PC-9 (cell line): ENCODE measurements at regions of chr11 and their contacts with region 1.

Region 1: DNA sequence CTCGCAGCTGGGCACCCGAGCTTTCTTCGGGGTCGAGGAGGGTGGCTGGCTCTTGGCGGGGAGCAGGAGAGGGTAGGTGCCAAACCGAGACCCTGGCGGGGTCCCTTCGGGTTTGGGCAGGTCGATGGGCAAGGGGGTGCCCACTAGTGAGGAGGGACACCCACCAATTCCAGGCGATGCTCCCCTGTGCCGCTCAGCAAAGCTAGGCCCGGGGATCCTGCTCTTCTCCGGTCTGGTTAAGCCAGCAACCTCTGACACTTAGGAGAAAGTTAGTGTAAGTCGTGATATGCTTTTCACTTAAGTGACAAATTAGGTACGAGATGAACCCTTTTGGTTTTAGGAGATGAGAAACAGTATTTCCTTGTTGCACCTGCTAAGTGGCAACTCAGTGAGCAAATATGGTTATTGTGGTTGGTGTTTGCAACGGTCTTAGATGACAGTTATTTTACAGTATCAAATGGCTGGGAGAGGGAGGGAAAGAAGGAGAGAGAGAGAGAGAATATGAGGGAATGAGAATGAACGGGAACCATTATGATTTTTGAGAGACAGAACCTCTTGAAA is 565 bp downstream of the NUCB2 start:
- DNase-seq: peak in 1 of 2 experiments; percentile 56
- H3K4me3 ChIP-seq: peak overlapping the region; percentile 79
- H3K27ac ChIP-seq: no peak overlapping the region
- H3K4me1 ChIP-seq: 0 out of 2 replicates have a peak, but pooled peaks cover 9% of the 10 kb centered on the region
- H3K27me3 ChIP-seq: no peaks in the 10 kb centered on the region
- CTCF ChIP-seq: no peak

Region 2: DNA sequence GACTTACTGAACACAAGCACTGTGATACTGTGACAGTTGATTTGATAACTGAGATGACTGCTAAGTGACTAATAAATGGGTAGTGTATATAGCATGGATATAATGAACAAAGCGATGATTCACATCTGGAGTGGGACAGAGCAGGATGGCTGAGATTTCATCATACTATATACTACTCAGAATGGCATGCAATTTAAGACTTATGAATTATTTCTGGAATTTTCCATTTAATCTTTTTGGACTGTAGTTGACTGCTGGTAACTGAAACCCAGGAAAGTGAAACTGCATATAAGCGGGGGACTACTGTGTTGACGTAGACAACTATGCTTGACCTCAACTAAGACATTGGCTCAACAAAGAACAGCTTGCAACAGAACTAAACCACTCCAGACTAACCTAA is 20.6 kb before region 1 on chr11:
- CTCF ChIA-PET with region 1: no interaction called
- POLR2A ChIA-PET with region 1: interaction called, 16 read pairs
- intact Hi-C with region 1: no loop called
- DNase-seq: peak in 1 of 2 experiments; percentile 77
- H3K4me3 ChIP-seq: no peak overlapping the region
- H3K27ac ChIP-seq: peak overlapping the region; percentile 79
- H3K4me1 ChIP-seq: peaks cover 15% of the 10 kb centered on the region
- H3K27me3 ChIP-seq: no peaks in the 10 kb centered on the region
- CTCF ChIP-seq: no peak

Region 3: DNA sequence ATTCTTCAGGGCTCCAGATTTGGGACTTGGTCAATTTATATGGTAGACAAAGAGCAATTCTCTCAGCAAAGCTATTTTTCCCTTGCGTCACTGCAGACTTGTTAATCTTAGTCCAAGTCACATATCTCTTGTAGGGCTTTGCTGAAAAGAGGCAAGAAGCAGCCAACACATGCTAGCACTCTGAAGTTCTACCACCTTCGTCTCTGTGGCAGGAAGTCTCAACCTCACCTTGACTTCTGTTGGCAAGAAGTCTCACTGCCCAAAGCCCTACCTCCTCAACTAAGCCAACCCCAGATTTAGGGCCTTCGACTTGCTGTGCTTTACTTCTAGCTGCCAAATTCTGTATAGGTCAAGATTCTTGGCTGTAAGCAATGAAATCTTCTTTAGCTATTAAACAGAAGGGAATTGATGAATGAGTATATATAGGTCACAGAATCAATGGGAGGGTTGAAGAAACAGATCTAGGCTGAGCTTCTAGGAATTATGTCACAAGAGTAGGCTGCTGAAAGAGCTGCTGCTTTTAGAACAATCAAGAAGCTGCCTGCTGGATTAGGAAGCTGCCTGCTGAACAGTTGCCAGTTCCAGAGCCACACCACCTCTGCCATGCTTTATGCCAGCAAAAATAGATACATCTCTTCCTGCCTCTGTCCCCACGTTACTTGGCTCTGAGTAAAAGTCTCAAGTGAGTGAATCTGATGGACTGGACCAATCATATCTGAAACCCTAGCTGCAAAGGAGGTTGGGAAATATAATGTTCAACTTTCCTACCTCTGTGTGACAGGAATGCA is 56.9 kb after region 1 on chr11:
- CTCF ChIA-PET with region 1: no interaction called
- POLR2A ChIA-PET with region 1: no interaction called
- intact Hi-C with region 1: no loop called
- DNase-seq: no peak
- H3K4me3 ChIP-seq: no peak overlapping the region
- H3K27ac ChIP-seq: no peak overlapping the region
- H3K4me1 ChIP-seq: no peaks in the 10 kb centered on the region
- H3K27me3 ChIP-seq: no peaks in the 10 kb centered on the region
- CTCF ChIP-seq: no peak